Posterior vena cava (tissue), 2 donors: ENCODE measurements at regions of chr2 and their contacts with region 1.

Region 1: GRCh38 chr2:99867770-99868169 is 274.6 kb downstream of the AFF3 start:
- DNase-seq: no peak

Region 2: GRCh38 chr2:99846462-99847107 is 21.2 kb before region 1 on chr2:
- intact Hi-C with region 1: loop called in 1 of 2 experiments (anchors 2 kb)
- DNase-seq: no peak

Region 3: DNA sequence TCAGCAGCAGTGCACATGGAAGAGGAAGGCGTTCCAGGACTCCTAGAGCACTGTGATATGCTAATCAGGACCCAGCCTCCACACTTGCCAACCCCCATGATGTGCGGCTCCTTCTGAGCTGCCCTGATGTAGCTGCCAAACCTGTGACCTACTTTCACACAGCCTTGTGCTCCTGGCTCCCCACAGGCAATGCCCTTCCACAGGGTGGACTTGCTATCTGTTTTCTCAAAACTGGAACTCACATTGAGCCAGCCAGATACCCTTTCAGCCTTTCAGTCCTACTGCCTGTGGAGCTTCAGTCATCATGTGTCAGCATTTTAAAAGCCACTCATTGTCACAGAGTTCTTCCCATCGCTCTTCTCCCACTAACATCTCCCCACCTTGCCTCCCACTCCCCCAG is 93.0 kb after region 1 on chr2:
- intact Hi-C with region 1: no loop called
- DNase-seq: no peak